ENCODE measurements at regions of chr7 and their contacts with region 1.

Region 1: GRCh38 chr7:99990460-99990852 is 14.6 kb upstream of the AZGP1 start:
- DNase-seq: no peak
- ATAC-seq: no peak
- H3K4me3 ChIP-seq: no peak overlapping the region
- H3K27ac ChIP-seq: no peak overlapping the region
- H3K4me1 ChIP-seq: no peaks in the 10 kb centered on the region
- CTCF ChIP-seq: no peak
- EP300 ChIP-seq: no peak
- POLR2A ChIP-seq: no peak
- RAD21 ChIP-seq: no peak

Region 2: GRCh38 chr7:99918959-99919813 is 71.3 kb before region 1 on chr7 and contains the start of gene TRIM4:
- CTCF ChIA-PET with region 1: interaction called, 20 read pairs
- POLR2A ChIA-PET with region 1: interaction called, 4 read pairs
- DNase-seq: peak; percentile 92 to 95
- ATAC-seq: peak; percentile 98 to 100
- H3K4me3 ChIP-seq: peak within 1 kb of the TSS; percentile 81
- H3K27ac ChIP-seq: peak within 1 kb of the TSS; percentile 90 to 98
- H3K4me1 ChIP-seq: peaks cover 13% of the 10 kb centered on the region; the same call in 2 of the 3 replicates
- CTCF ChIP-seq: peak; percentile 9; the same call in 1 of the 3 replicates
- EP300 ChIP-seq: no peak
- POLR2A ChIP-seq: peak; percentile 72
- RAD21 ChIP-seq: peak in 1 of 2 experiments; percentile 29; a peak in 1 of 5 replicates
- polyA plus RNA-seq, gene TRIM4: 33.8 and 34.3 TPM in 2 replicates

Region 3: GRCh38 chr7:99975782-99976521 is 14.5 kb before region 1 on chr7 and contains the start of gene AZGP1:
- CTCF ChIA-PET with region 1: interaction called, 83 read pairs
- POLR2A ChIA-PET with region 1: no interaction called
- DNase-seq: no peak
- ATAC-seq: peak in 1 of 2 experiments; percentile 21; a peak in 3 of 6 replicates
- H3K4me3 ChIP-seq: no peak within 1 kb of the TSS
- H3K27ac ChIP-seq: no peak within 1 kb of the TSS
- H3K4me1 ChIP-seq: no peaks in the 10 kb centered on the region
- CTCF ChIP-seq: no peak
- EP300 ChIP-seq: no peak
- POLR2A ChIP-seq: no peak
- RAD21 ChIP-seq: no peak
- polyA plus RNA-seq, gene AZGP1: 0.13 and 0.48 TPM in 2 replicates

Region 4: DNA sequence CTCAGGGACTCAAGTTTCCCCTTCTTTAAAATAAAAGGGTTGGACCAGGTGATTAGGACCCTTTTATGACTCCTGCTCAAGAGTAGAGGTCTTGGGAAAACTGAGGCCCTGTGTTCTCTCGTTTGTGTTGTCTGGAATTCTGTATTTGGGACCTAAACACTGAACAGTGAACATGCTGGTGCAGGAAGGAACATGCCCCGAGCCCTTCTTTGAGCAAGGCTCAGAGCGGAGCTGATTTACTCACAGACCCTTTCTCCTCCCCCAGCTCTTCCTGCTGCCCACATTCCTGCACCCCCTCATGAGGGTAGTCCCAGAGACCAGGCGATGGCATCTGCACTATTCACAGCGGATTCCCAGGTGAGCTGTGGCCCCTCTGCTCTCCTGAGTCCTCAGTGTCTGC is 39.1 kb after region 1 on chr7:
- CTCF ChIA-PET with region 1: interaction called, 14 read pairs
- POLR2A ChIA-PET with region 1: no interaction called
- DNase-seq: no peak
- ATAC-seq: no peak
- H3K4me3 ChIP-seq: no peak overlapping the region
- H3K27ac ChIP-seq: no peak overlapping the region
- H3K4me1 ChIP-seq: peaks cover 2% of the 10 kb centered on the region; the same call in 2 of the 3 replicates
- CTCF ChIP-seq: no peak
- EP300 ChIP-seq: no peak
- POLR2A ChIP-seq: no peak
- RAD21 ChIP-seq: no peak

Region 5: DNA sequence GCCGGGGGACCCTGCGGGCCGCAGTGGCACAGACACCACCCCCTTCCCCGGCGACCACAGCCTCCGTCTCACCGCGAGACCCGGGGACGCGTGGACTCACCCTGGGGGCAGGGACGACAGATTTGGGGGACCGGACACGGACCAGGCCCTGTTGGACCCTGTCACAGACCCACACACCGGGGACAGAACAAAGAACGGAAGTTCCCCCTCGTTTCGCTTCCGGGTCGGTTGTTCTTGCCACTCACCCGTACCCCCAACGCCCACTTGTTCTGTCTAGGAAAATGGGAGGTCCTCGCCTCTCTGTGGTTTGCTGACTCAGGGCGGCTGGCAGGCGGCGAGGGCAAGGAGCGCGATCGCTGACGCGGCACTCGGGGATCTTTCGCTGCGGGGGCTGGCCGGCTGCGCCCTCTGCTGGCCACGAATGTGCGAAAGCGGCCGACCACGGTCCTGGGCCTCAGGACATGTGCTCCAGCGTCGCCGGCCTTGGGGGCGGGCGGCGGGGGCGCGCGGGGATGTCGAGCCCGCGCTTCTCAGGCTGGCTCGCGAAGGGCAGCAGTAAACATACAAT is 91.2 kb after region 1 on chr7 and contains the start of gene ZNF3:
- CTCF ChIA-PET with region 1: interaction called, 14 read pairs
- POLR2A ChIA-PET with region 1: no interaction called
- DNase-seq: peak; percentile 91 to 99
- ATAC-seq: peak; percentile 94 to 96
- H3K4me3 ChIP-seq: peak within 1 kb of the TSS; percentile 98
- H3K27ac ChIP-seq: peak within 1 kb of the TSS; percentile 88 to 90
- H3K4me1 ChIP-seq: peaks cover 7% of the 10 kb centered on the region; the same call in 1 of the 3 replicates
- CTCF ChIP-seq: peak; percentile 95
- EP300 ChIP-seq: no peak
- POLR2A ChIP-seq: peak; percentile 69
- RAD21 ChIP-seq: peak; percentile 76 to 88
- polyA plus RNA-seq, gene ZNF3: 29.0 and 30.2 TPM in 2 replicates

Measured in A549 (cell line).